Endothelial cell of umbilical vein (primary cell): ENCODE measurements at regions of chr3 and their contacts with region 1.

Region 1: GRCh38 chr3:41961750-41962679 is at the start of gene ULK4:
- DNase-seq: peak; percentile 100
- H3K4me3 ChIP-seq: peak within 1 kb of the TSS; percentile 29 to 72 (median 64)
- H3K27ac ChIP-seq: peak within 1 kb of the TSS; percentile 90
- H3K4me1 ChIP-seq: peaks cover 13% of the 10 kb centered on the region
- H3K27me3 ChIP-seq: no peaks in the 10 kb centered on the region
- CTCF ChIP-seq: no peak
- POLR2A ChIP-seq: peak; percentile 63
- total RNA-seq, gene ULK4: 13.1 and 16.0 TPM in 2 replicates

Region 2: GRCh38 chr3:40452876-40453730 is 1508.9 kb before region 1 on chr3:
- CTCF ChIA-PET with region 1: no interaction called
- POLR2A ChIA-PET with region 1: no interaction called
- dilution Hi-C with region 1: no loop called
- intact Hi-C with region 1: loop called (anchors 2 kb)
- DNase-seq: peak; percentile 99
- H3K4me3 ChIP-seq: peak overlapping the region; percentile 42 to 82 (median 73)
- H3K27ac ChIP-seq: peak overlapping the region; percentile 50
- H3K4me1 ChIP-seq: peaks cover 8% of the 10 kb centered on the region
- H3K27me3 ChIP-seq: no peaks in the 10 kb centered on the region
- CTCF ChIP-seq: no peak
- POLR2A ChIP-seq: peak; percentile 89

Region 3: DNA sequence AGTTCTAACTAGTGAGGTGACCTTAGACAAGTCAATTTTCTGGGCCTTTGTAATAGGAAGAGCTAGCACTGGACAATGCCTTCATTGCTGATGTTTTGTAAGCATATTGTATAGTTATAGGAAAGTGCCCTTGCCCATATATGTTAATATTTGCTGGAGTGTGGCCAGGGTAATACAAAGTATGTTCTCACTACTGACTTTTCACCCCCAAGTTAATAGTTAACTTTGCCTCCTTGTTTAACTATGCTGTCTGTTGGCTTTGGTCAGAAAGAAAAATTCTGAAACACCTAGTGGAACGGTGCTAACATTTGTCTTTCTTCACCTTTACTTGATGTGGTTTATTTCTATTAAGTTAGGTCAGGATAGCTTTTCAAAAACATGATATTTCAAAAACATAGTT is 1050.1 kb before region 1 on chr3:
- CTCF ChIA-PET with region 1: no interaction called
- POLR2A ChIA-PET with region 1: no interaction called
- dilution Hi-C with region 1: no loop called
- intact Hi-C with region 1: no loop called
- DNase-seq: no peak
- H3K4me3 ChIP-seq: no peak overlapping the region
- H3K27ac ChIP-seq: no peak overlapping the region
- H3K4me1 ChIP-seq: no peaks in the 10 kb centered on the region
- H3K27me3 ChIP-seq: no peaks in the 10 kb centered on the region
- CTCF ChIP-seq: no peak
- POLR2A ChIP-seq: no peak

Region 4: DNA sequence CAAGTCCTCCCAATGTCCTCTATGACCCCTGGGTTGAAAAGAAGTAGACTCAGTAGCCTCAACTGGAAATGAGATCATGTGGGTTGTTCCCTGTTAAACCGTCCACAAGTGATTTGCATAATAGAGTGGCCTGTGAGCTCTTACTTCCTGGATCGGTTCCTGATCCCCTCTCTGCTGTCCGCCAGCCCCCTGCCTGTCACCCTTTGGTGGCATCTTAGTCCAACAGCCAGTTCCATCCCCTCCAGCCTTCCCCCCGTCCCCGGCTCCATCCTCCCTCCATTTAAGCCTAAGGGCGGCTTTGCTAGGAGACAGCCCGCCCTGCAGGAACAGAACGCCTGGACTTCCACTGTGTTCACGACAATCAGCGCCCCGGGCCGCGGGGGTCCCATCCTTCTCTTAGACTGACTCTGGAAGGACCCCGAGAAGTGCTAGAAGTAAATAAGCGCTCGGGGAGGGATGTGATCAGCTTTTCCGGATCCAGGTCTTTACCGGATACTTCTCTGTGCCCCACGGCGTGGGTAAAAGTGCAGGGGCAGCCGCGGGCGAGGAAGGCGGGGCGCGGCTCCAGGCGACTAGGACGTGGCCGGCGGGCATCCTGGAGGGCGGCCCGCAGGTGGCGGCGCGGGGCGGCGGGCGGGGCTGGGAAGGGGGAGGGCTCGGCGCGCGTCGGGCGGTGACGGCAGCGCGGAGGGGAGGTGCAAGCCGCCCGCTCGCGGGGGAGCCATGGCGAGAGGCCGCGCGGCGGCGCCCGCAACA is 51.1 kb after region 1 on chr3:
- CTCF ChIA-PET with region 1: interaction called, 4 read pairs
- POLR2A ChIA-PET with region 1: no interaction called
- dilution Hi-C with region 1: no loop called
- intact Hi-C with region 1: loop called (anchors 1 kb)
- DNase-seq: peak; percentile 72
- H3K4me3 ChIP-seq: peak overlapping the region; percentile 25 to 86 (median 56)
- H3K27ac ChIP-seq: no peak overlapping the region
- H3K4me1 ChIP-seq: peaks cover 13% of the 10 kb centered on the region
- H3K27me3 ChIP-seq: no peaks in the 10 kb centered on the region
- CTCF ChIP-seq: no peak
- POLR2A ChIP-seq: no peak

Region 5: DNA sequence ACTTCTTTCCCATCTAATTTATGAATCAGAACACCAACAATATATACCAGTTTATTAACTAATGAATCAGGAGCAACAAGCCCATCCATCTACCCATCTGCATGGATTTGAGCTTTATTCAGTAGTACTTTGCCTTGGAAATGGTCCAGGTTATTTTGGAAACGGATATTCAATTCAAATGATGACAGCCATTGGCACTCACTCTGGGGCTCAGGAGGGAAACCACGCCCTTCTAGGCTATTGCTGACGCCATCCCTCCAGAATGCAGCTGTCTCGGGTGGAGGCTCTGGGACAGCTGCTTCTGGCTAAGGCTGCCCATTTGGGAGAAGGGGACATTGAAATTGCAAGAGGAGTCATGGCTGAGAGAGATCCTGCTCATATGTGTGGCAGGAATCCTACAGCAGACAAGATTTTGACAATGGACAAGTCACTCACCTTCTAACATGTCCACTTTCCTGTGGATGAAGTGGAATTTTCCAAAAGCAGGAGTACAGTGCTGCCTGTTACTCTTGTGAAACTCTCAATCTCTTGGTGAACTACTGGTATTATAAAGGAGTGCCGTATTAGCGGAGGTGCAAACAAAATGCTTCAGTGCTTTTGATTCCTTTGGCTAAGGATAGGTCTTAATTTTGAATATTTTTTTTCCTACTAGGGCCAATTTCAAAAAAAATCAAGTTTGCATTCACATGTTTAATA is 99.8 kb after region 1 on chr3:
- CTCF ChIA-PET with region 1: no interaction called
- POLR2A ChIA-PET with region 1: no interaction called
- dilution Hi-C with region 1: no loop called
- intact Hi-C with region 1: loop called (anchors 1 kb)
- DNase-seq: peak; percentile 90
- H3K4me3 ChIP-seq: no peak overlapping the region
- H3K27ac ChIP-seq: peak overlapping the region; percentile 80
- H3K4me1 ChIP-seq: peaks cover 36% of the 10 kb centered on the region
- H3K27me3 ChIP-seq: no peaks in the 10 kb centered on the region
- CTCF ChIP-seq: no peak
- POLR2A ChIP-seq: no peak

Region 6: GRCh38 chr3:42106646-42107045 is 144.6 kb after region 1 on chr3:
- CTCF ChIA-PET with region 1: no interaction called
- POLR2A ChIA-PET with region 1: interaction called, 3 read pairs
- dilution Hi-C with region 1: no loop called
- intact Hi-C with region 1: loop called (anchors 1 kb)
- DNase-seq: peak; percentile 89
- H3K4me3 ChIP-seq: no peak overlapping the region
- H3K27ac ChIP-seq: peak overlapping the region; percentile 100
- H3K4me1 ChIP-seq: peaks cover 16% of the 10 kb centered on the region
- H3K27me3 ChIP-seq: no peaks in the 10 kb centered on the region
- CTCF ChIP-seq: no peak
- POLR2A ChIP-seq: no peak